Calu3 (cell line): ENCODE measurements at regions of chr6 and their contacts with region 1.

Region 1: DNA sequence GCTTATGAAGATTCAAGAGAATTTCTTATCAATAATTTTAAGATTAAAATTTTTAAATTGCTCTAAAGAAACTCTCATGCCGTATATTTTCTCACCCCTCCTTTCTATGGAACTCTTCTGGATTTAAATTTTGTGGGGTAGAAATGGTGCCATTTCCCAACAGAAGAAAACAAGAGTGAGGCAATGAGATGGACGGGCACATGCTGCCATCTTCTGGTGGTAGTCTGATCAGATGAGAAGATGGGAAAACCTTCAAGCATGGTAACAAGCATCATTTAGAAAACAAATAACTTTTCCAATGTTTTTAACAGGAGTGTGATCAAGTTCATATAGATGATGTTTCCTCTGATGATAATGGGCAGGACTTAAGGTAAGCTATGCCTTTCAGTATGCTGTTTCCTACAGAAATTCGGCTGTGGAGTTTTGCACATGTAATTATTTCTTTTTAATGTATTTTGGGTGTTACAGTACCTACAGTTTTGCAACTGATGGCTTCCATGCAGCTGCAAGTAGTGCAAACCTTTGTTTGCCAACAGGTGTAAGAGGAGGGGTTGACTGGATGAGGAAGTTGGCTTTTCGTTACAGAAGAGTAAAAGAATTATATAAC is 271.4 kb downstream of the EYA4 start:
- DNase-seq: peak; percentile 62
- H3K4me3 Mint-ChIP-seq: no peak overlapping the region
- H3K27ac Mint-ChIP-seq: no peak overlapping the region
- H3K4me1 Mint-ChIP-seq: peaks cover 22% of the 10 kb centered on the region
- H3K27me3 Mint-ChIP-seq: no peaks in the 10 kb centered on the region
- CTCF ChIP-seq: peak; percentile 57

Region 2: GRCh38 chr6:132830334-132830751 is 682.2 kb before region 1 on chr6:
- CTCF ChIA-PET with region 1: no interaction called
- intact Hi-C with region 1: loop called (anchors 2 kb)
- DNase-seq: peak; percentile 34
- H3K4me3 Mint-ChIP-seq: no peak overlapping the region
- H3K27ac Mint-ChIP-seq: no peak overlapping the region
- H3K4me1 Mint-ChIP-seq: no peaks in the 10 kb centered on the region
- H3K27me3 Mint-ChIP-seq: no peaks in the 10 kb centered on the region
- CTCF ChIP-seq: peak; percentile 48

Region 3: GRCh38 chr6:133040094-133040802 is 472.3 kb before region 1 on chr6:
- CTCF ChIA-PET with region 1: no interaction called
- intact Hi-C with region 1: loop called (anchors 10 kb)
- DNase-seq: peak; percentile 61
- H3K4me3 Mint-ChIP-seq: no peak overlapping the region
- H3K27ac Mint-ChIP-seq: no peak overlapping the region
- H3K4me1 Mint-ChIP-seq: peaks cover 16% of the 10 kb centered on the region
- H3K27me3 Mint-ChIP-seq: no peaks in the 10 kb centered on the region
- CTCF ChIP-seq: peak; percentile 57

Region 4: GRCh38 chr6:133184798-133185372 is 327.6 kb before region 1 on chr6:
- CTCF ChIA-PET with region 1: no interaction called
- intact Hi-C with region 1: loop called (anchors 2 kb)
- DNase-seq: no peak
- H3K4me3 Mint-ChIP-seq: no peak overlapping the region
- H3K27ac Mint-ChIP-seq: no peak overlapping the region
- H3K4me1 Mint-ChIP-seq: peaks cover 9% of the 10 kb centered on the region
- H3K27me3 Mint-ChIP-seq: no peaks in the 10 kb centered on the region
- CTCF ChIP-seq: peak; percentile 59

Region 5: DNA sequence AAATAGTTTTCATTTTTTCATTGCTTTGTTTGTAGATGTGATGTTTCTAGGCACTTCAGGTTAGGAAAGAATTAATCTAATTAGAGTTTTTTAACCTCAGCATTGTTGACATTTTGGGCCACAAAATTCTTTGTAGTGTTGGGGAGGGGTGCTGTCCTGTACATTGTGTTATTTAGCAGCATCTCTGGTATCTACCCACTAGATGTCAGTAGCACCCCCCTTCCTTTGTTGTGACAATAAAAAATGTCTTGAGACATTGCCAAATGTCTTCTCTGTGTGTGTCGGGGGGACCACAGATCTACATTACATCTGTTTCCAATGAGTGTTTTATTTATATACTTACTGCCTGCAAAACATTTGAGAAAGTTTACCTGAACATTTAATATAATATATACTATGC is 225.7 kb before region 1 on chr6:
- CTCF ChIA-PET with region 1: no interaction called
- intact Hi-C with region 1: loop called (anchors 1 kb)
- DNase-seq: peak; percentile 39
- H3K4me3 Mint-ChIP-seq: no peak overlapping the region
- H3K27ac Mint-ChIP-seq: no peak overlapping the region
- H3K4me1 Mint-ChIP-seq: peaks cover 29% of the 10 kb centered on the region
- H3K27me3 Mint-ChIP-seq: no peaks in the 10 kb centered on the region
- CTCF ChIP-seq: peak; percentile 47

Region 6: DNA sequence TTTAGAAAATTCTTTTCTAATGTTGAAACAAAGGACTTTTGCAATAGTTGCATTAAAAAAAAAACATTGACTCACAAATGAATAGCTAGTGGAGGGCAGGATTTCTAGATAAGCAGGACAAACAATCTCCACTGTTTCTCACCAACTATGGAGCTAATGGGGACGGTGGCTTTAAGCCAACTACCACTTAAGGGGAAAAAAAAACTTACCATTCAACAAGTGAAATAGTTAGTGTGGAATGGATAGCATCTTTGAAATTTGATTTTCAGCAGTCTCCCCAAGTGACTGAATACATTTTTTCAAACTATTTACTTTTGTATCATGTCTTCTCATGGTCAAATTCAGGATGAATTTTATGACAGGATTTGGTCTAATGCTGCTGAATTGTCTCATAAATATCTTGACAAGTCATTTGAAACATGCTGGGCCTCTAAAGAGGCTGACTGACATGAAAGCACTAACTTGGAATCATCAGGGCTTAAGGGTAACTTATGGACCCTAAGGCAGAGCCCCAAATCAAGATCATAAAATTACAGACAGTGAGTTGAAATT is 170.8 kb before region 1 on chr6:
- CTCF ChIA-PET with region 1: no interaction called
- intact Hi-C with region 1: loop called (anchors 10 kb)
- DNase-seq: peak; percentile 63
- H3K4me3 Mint-ChIP-seq: no peak overlapping the region
- H3K27ac Mint-ChIP-seq: no peak overlapping the region
- H3K4me1 Mint-ChIP-seq: peaks cover 30% of the 10 kb centered on the region
- H3K27me3 Mint-ChIP-seq: no peaks in the 10 kb centered on the region
- CTCF ChIP-seq: no peak

Region 7: DNA sequence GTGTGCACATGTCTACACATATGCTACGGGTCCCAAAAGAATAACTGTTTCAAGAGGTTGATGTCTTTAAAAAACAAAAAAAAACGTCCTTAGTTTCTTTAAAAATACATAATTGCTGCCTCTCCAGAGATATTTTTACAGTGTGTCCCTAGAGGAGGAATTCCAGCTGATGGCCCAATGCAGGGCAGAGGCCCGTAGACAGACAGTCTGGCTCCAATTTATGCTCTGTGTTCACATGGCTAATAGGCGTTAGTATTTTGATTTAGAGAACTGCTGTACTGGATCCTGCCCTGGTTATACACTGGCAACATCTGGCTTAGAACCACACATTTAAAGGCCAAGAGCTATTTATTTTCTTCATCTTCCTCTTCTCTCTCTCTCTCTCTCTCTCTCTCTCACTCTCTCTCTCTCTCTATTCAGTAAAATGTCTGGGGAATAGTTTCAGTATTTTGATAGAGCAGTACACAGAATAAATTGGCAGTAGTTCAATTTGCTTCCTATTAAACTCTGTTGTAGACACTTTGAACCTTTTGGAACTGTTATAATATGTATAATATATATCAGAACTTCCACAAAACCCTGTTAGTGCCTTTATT is 10.7 kb before region 1 on chr6:
- CTCF ChIA-PET with region 1: no interaction called
- intact Hi-C with region 1: no loop called
- DNase-seq: no peak
- H3K4me3 Mint-ChIP-seq: no peak overlapping the region
- H3K27ac Mint-ChIP-seq: no peak overlapping the region
- H3K4me1 Mint-ChIP-seq: peaks cover 27% of the 10 kb centered on the region
- H3K27me3 Mint-ChIP-seq: no peaks in the 10 kb centered on the region
- CTCF ChIP-seq: no peak

Region 8: DNA sequence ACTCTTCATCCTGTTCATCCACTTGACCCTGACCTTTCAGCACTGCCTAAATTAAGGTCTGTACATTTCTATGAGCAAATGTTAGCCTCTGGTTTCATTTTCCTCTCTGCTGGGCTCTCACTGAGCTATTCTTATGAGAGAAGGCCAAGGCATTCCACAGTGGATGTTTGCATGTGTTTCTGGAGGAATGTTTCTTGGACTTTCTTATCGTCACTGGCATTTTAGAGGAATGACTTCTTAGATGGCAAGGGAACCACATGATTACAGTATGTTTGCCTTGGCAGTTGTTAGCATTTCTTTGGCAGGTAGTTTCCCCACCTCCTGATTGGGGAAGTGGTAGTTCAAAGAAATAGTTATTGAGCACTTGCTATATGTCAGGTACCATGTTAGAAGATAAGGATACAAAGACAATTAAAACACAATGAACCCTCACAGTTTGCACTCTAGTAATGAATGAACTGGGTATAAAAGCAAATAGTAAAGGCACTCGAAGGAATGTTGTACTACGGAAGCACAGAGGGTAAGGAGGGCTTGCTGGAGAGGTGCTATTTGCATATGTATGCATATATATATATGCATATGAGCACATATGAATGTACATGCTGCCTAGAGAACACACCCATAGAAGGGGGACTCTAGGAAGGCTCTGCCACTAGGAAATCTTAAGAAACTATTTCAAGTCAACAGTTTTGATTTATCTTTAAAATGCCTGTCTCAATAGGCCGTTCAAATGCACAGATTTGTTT is 36.1 kb after region 1 on chr6:
- CTCF ChIA-PET with region 1: no interaction called
- intact Hi-C with region 1: loop called (anchors 1 kb)
- DNase-seq: peak; percentile 56
- H3K4me3 Mint-ChIP-seq: no peak overlapping the region
- H3K27ac Mint-ChIP-seq: peak overlapping the region; percentile 0
- H3K4me1 Mint-ChIP-seq: peaks cover 51% of the 10 kb centered on the region
- H3K27me3 Mint-ChIP-seq: no peaks in the 10 kb centered on the region
- CTCF ChIP-seq: no peak

Region 9: DNA sequence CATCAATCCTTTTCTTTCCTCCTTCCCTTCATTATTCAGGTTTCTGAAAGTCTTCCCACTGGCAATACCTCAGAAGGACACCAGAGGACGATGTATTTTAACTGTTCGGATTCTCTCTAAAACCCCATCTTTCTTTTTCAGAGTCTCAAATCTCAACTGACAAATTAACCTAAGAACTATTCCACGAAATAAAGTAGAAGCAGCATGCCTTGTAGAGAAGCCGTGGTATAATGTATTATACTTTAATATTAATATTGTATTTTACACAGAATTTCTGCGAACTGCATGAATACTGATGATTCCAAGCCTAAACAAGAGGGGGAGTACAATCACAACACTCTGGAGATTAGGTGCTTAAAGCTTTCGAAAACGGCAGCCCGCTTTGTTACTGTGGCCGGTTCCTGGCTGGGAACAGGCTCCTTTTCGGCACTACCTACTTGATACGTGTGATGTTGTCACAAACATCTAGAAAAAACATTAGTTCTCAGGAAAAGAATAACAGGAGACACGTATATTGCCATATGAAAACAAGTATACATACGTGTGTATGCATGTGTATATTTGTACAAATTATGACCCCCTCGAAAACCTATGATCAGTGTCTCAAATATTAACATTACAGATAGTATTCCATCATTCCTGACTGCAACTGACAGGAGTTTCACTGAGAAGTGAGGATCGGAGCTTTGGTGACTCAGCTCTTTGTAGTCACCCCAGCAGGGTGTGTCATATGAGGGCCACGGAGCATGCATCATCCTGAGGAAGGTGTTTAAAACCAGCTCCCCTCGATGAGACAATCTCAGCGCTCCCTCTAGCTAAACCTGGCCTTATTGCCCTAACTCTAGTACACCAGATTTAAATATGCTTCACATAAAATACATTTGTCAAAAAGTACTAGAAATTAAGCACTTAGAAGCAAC is 56.7 kb after region 1 on chr6:
- CTCF ChIA-PET with region 1: no interaction called
- intact Hi-C with region 1: no loop called
- DNase-seq: peak; percentile 66
- H3K4me3 Mint-ChIP-seq: peak overlapping the region; percentile 63
- H3K27ac Mint-ChIP-seq: peak overlapping the region; percentile 56
- H3K4me1 Mint-ChIP-seq: no peaks in the 10 kb centered on the region
- H3K27me3 Mint-ChIP-seq: no peaks in the 10 kb centered on the region
- CTCF ChIP-seq: peak; percentile 82